Breast epithelium (tissue), 4 donors: ENCODE measurements at regions of chr15 and their contacts with region 1.

Region 1: DNA sequence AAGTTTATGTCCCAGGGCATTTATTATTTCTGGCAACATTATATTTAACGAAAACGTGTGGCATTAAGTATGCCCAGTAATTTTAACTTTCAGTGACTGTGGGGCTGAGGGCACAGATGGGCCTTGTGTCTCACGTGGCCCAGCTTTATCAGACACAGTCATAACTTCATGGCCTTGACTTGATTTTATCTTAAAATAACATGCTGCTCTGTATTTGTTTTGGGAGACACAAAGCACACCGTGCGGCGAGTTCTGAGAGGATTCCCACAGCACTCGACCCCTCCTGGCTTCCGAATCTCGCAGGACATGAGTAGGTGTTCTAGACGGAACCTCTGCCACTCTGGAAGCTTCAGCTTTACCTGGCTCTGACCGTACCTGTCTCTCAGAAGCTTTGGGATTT is 180.8 kb downstream of the ADAMTS17 start:
- DNase-seq: no peak
- H3K4me3 ChIP-seq: no peak overlapping the region
- H3K27ac ChIP-seq: no peak overlapping the region
- H3K4me1 ChIP-seq: no peaks in the 10 kb centered on the region
- H3K27me3 ChIP-seq: no peaks in the 10 kb centered on the region
- CTCF ChIP-seq: no peak
- POLR2A ChIP-seq: no peak

Region 2: DNA sequence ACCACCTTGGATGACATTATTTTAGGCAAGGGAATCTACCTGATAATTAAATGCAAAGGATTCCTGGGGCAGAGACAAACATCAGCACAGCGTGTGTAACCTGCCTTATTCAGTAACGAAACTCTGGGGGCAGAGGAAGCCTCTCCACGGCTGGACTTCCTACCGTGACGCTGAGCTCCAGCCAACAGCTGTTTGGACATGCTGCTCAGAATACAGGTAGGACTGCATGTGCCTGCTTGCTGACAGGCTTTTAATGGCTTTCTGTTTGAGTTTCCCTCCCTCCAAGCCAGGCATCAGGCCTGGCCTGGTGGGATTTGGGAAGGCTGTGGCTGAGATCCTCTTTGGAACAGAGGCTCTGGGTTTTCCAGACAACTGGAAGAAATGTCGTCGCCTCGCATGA is 30.2 kb after region 1 on chr15:
- intact Hi-C with region 1: loop called (anchors 2 kb)
- DNase-seq: no peak
- H3K4me3 ChIP-seq: no peak overlapping the region
- H3K27ac ChIP-seq: no peak overlapping the region
- H3K4me1 ChIP-seq: no peaks in the 10 kb centered on the region
- H3K27me3 ChIP-seq: no peaks in the 10 kb centered on the region
- CTCF ChIP-seq: no peak
- POLR2A ChIP-seq: no peak